ENCODE measurements at regions of chr2 and their contacts with region 1.

Region 1: GRCh38 chr2:71100195-71100964 is 29.6 kb downstream of the MCEE start:
- DNase-seq: peak; percentile 2
- ATAC-seq: peak; percentile 84
- H3K4me3 ChIP-seq: no peak overlapping the region
- H3K27ac ChIP-seq: no peak overlapping the region
- H3K4me1 ChIP-seq: no peaks in the 10 kb centered on the region
- H3K27me3 ChIP-seq: no peaks in the 10 kb centered on the region
- CTCF ChIP-seq: peak; percentile 72 to 80 (median 78)
- EP300 ChIP-seq: no peak
- POLR2A ChIP-seq: no peak
- RAD21 ChIP-seq: peak; percentile 60

Region 2: DNA sequence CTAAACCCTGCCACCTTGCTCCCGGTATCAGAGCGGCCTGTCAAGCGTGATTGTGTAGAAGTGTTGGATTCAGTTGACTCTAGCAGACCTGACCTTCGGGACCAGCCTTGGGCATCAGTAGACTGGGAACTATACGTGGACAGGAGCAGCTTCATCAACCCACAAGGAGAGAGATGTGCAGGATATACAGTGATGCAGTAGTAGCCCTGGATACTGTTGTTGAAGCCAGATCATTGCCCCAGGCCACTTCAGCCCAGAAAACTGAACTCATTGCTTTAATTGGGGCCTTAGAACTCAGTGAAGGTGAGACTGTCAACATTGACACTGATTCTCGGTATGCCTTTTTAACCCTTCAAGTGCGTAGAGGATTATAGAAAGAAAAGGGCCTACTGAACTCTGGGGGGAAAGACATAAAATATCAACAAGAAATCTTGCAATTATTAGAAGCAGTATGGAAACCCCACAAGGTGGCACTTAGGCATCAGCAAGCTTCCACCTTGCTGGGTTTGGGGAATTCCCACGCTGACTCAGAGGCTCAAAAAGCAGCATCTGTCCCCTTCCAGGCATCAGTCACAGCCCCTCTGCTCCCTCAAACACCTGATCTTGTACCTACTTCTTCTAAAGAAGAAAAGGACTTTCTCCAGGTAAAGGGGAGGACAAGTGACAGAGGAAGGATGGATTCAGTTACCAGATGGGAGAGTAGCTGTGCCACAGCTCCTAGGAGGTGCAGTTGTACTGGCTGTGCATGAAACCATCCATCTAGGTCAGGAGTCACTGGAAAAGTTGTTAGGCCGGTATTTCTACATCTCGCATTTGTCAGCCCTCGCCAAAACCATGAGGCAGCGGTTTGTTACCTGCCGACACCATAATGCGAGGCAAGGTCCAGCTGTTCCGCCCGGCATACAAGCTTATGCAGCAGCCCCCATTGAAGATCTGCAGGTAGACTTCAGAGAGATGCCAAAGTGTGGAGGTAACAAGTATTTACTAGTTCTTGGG is 50.7 kb before region 1 on chr2:
- CTCF ChIA-PET with region 1: interaction called, 13 read pairs
- POLR2A ChIA-PET with region 1: no interaction called
- RAD21 ChIA-PET with region 1: interaction called, 6 read pairs
- SMC1A ChIA-PET with region 1: interaction called, 7 read pairs
- in situ Hi-C with region 1: no loop called
- intact Hi-C with region 1: loop called (anchors 2 kb)
- DNase-seq: no peak
- ATAC-seq: peak; percentile 90
- H3K4me3 ChIP-seq: no peak overlapping the region
- H3K27ac ChIP-seq: no peak overlapping the region
- H3K4me1 ChIP-seq: peaks cover 4% of the 10 kb centered on the region; the same call in 1 of the 2 replicates
- H3K27me3 ChIP-seq: no peaks in the 10 kb centered on the region
- CTCF ChIP-seq: peak; percentile 32 to 55 (median 35); a peak in 5 of 6 replicates
- EP300 ChIP-seq: no peak
- POLR2A ChIP-seq: no peak
- RAD21 ChIP-seq: peak; percentile 73

Region 3: GRCh38 chr2:71113843-71114242 is 13.5 kb after region 1 on chr2:
- CTCF ChIA-PET with region 1: interaction called, 37 read pairs
- POLR2A ChIA-PET with region 1: no interaction called
- RAD21 ChIA-PET with region 1: interaction called, 3 read pairs
- SMC1A ChIA-PET with region 1: interaction called, 13 read pairs
- in situ Hi-C with region 1: no loop called
- intact Hi-C with region 1: no loop called
- DNase-seq: no peak
- ATAC-seq: no peak
- H3K4me3 ChIP-seq: no peak overlapping the region
- H3K27ac ChIP-seq: no peak overlapping the region
- H3K4me1 ChIP-seq: no peaks in the 10 kb centered on the region
- H3K27me3 ChIP-seq: no peaks in the 10 kb centered on the region
- CTCF ChIP-seq: no peak
- EP300 ChIP-seq: no peak
- POLR2A ChIP-seq: no peak
- RAD21 ChIP-seq: no peak

Region 4: GRCh38 chr2:71150082-71150816 is 49.9 kb after region 1 on chr2:
- CTCF ChIA-PET with region 1: interaction called, 52 read pairs
- POLR2A ChIA-PET with region 1: no interaction called
- RAD21 ChIA-PET with region 1: interaction called, 31 read pairs
- SMC1A ChIA-PET with region 1: interaction called, 14 read pairs
- in situ Hi-C with region 1: no loop called
- intact Hi-C with region 1: no loop called
- DNase-seq: no peak
- ATAC-seq: no peak
- H3K4me3 ChIP-seq: no peak overlapping the region
- H3K27ac ChIP-seq: no peak overlapping the region
- H3K4me1 ChIP-seq: no peaks in the 10 kb centered on the region
- H3K27me3 ChIP-seq: no peaks in the 10 kb centered on the region
- CTCF ChIP-seq: no peak
- EP300 ChIP-seq: no peak
- POLR2A ChIP-seq: 0 out of 2 replicates have a peak, but pooled peaks have one; percentile 21
- RAD21 ChIP-seq: no peak

Region 5: DNA sequence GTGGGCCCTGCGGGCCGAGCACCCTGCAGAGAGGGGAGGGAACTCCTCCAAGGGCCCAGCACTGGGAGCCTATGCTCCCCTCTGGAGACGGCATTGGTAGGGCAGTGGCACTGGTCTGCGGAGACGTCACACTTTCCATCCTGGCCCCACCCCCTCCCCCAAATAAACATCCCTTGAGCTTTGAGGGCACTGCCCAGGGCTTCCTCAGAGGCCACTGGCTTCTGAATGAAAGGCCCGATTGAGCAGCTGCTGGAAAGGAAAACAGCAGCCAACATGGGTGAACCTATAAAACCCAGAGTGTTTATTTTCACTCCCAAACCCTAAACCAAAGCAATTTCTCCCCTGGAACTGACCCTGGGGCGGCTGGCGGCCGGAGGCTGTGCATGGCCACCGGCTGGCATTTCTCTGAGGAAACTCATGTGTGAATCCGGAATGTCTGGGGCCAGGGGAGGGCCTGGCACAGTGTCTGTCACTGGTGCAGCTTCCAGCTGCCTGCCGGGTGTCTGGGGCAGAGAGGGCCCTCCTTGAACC is 491.9 kb after region 1 on chr2:
- CTCF ChIA-PET with region 1: no interaction called
- POLR2A ChIA-PET with region 1: no interaction called
- RAD21 ChIA-PET with region 1: no interaction called
- SMC1A ChIA-PET with region 1: no interaction called
- in situ Hi-C with region 1: no loop called
- intact Hi-C with region 1: no loop called
- DNase-seq: no peak
- ATAC-seq: no peak
- H3K4me3 ChIP-seq: no peak overlapping the region
- H3K27ac ChIP-seq: no peak overlapping the region
- H3K4me1 ChIP-seq: no peaks in the 10 kb centered on the region
- H3K27me3 ChIP-seq: no peaks in the 10 kb centered on the region; a peak in 1 of 4 replicates
- CTCF ChIP-seq: no peak
- EP300 ChIP-seq: no peak
- POLR2A ChIP-seq: no peak
- RAD21 ChIP-seq: no peak

Region 6: DNA sequence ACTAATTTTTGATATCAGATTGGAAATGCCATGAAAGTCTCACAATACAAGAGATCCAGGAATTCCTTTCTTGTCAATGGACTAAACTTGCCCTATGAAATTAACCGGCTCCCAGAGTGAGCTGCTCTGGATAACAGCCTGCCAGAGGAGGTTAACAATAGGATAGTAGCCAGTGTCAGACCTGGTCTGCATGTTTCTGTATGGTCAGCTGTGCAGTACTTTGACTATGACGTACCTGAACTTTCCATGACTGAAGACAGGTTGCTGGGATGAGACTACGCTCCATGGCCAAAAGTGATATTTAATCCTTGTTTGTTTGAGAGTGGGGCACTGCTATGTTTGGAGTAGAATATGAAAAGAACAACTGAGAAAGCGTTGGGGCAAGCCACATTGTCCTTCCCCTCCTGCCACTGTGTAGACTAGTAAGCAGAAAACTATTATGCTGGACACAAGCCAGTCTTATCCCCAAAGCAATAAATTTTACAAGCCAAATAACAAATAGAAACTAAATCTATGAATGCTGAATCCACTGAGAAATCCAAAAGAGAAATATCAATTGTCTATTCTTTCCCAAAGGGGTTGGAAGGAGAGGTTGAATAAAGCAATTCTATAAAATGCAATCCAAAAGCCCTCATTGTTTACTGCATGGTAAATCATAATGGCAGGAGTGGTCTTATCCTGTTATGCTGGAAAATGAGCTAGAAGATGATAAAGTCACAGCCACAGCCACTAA is 1162.8 kb after region 1 on chr2:
- CTCF ChIA-PET with region 1: no interaction called
- POLR2A ChIA-PET with region 1: no interaction called
- RAD21 ChIA-PET with region 1: no interaction called
- SMC1A ChIA-PET with region 1: no interaction called
- in situ Hi-C with region 1: no loop called
- intact Hi-C with region 1: no loop called
- DNase-seq: no peak
- ATAC-seq: no peak
- H3K4me3 ChIP-seq: no peak overlapping the region
- H3K27ac ChIP-seq: no peak overlapping the region
- H3K4me1 ChIP-seq: no peaks in the 10 kb centered on the region
- H3K27me3 ChIP-seq: no peaks in the 10 kb centered on the region
- CTCF ChIP-seq: no peak
- EP300 ChIP-seq: no peak
- POLR2A ChIP-seq: no peak
- RAD21 ChIP-seq: no peak